ENCODE measurements at regions of chr1 and their contacts with region 1.

Region 1: GRCh38 chr1:181062836-181063428 is 25.6 kb upstream of the IER5 start:
- DNase-seq: peak; percentile 57
- H3K4me3 Mint-ChIP-seq: peak overlapping the region; percentile 65
- H3K27ac Mint-ChIP-seq: peak overlapping the region; percentile 79
- H3K4me1 Mint-ChIP-seq: peaks cover 25% of the 10 kb centered on the region
- H3K27me3 Mint-ChIP-seq: peaks cover 2% of the 10 kb centered on the region

Region 2: DNA sequence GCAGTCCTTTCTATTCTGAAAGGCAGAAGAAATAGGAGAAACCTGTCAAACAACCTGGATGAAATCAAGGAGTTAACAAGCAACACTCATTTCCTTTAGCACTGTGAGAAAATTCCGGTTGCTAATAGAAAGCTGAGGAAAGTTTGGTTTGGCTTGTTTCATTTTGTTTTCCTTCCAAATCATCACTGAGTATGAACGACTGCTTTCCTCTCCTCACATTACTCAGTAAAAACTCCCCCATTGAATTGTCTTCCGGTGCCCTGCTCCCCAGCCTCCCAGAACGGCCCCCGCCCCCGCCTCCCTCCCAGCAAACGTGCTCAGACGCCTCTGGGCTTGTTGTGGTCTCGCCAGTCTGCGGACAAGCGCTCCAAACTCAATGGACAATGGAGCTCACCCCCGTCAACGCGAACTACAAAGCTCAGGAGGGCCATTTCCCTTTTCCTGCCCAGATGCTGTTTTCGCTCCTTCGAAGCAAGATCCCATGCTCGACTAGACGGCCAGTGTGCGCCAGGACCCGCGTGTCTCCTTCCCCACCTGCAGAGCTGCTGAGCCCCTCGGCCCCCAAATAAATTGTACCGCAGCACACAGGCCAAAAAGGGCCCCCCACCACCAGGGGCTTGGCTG is 41.0 kb before region 1 on chr1:
- CTCF ChIA-PET with region 1: no interaction called
- POLR2A ChIA-PET with region 1: interaction called, 11 read pairs
- DNase-seq: peak; percentile 62
- H3K4me3 Mint-ChIP-seq: peak overlapping the region; percentile 95
- H3K27ac Mint-ChIP-seq: peak overlapping the region; percentile 89
- H3K4me1 Mint-ChIP-seq: peaks cover 48% of the 10 kb centered on the region
- H3K27me3 Mint-ChIP-seq: peaks cover 18% of the 10 kb centered on the region

Region 3: DNA sequence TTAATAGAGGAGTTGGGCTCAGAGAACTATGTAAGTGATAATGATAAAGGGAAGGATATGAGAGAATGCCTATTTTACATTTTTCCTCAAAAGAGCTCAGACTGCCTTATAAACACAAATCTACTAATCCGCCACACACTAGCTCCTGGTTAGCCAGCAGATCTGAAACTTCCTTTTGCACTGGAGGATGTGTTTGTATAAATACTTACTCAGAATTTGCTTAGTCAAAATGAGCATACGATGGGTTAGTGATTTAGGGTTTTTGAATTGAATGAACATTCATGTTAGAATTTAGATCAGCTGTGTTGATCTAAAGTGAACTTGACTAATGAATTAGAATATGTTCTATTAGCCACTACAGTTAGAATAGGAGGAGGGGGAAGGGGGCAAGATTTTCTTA is 16.4 kb after region 1 on chr1:
- CTCF ChIA-PET with region 1: interaction called, 11 read pairs
- POLR2A ChIA-PET with region 1: interaction called, 10 read pairs
- DNase-seq: no peak
- H3K4me3 Mint-ChIP-seq: no peak overlapping the region
- H3K27ac Mint-ChIP-seq: peak overlapping the region; percentile 8
- H3K4me1 Mint-ChIP-seq: peaks cover 38% of the 10 kb centered on the region
- H3K27me3 Mint-ChIP-seq: peaks cover 17% of the 10 kb centered on the region

Region 4: DNA sequence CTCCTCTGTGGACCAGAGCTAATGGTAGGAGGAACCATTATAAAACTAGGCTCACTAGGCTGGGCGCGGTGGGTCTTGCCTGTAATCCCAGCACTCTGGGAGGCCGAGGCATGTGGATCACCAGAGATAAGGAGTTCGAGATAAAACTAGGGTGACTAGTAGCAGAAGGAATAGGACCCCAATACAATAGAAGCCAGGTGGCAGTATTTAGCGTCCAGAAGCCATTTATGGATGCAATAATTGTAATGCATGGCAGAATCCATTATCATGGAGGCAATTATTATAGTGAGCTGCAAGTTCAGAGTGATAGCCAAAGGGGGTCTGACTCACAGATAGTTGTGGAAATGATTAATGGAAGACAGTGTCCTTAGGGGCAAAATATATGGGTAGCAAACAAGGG is 169.6 kb after region 1 on chr1:
- CTCF ChIA-PET with region 1: no interaction called
- POLR2A ChIA-PET with region 1: no interaction called
- DNase-seq: no peak
- H3K4me3 Mint-ChIP-seq: no peak overlapping the region
- H3K27ac Mint-ChIP-seq: no peak overlapping the region
- H3K4me1 Mint-ChIP-seq: no peaks in the 10 kb centered on the region
- H3K27me3 Mint-ChIP-seq: peaks cover 2% of the 10 kb centered on the region